Activated T-helper 1 cell treated with anti-CD3 and anti-CD28 coated beads, Interleukin-12 subunit alpha, Interleukin-12 subunit beta, Interleukin-2, Interleukin-4 antibody, amounts not matched to agents 30 ng/mL and 10 ng/mL and 1 ng/mL, durations not matched to agents 14 hours and 24 hours and 36 hours (primary cell): ENCODE measurements at regions of chr17 and their contacts with region 1.

Region 1: DNA sequence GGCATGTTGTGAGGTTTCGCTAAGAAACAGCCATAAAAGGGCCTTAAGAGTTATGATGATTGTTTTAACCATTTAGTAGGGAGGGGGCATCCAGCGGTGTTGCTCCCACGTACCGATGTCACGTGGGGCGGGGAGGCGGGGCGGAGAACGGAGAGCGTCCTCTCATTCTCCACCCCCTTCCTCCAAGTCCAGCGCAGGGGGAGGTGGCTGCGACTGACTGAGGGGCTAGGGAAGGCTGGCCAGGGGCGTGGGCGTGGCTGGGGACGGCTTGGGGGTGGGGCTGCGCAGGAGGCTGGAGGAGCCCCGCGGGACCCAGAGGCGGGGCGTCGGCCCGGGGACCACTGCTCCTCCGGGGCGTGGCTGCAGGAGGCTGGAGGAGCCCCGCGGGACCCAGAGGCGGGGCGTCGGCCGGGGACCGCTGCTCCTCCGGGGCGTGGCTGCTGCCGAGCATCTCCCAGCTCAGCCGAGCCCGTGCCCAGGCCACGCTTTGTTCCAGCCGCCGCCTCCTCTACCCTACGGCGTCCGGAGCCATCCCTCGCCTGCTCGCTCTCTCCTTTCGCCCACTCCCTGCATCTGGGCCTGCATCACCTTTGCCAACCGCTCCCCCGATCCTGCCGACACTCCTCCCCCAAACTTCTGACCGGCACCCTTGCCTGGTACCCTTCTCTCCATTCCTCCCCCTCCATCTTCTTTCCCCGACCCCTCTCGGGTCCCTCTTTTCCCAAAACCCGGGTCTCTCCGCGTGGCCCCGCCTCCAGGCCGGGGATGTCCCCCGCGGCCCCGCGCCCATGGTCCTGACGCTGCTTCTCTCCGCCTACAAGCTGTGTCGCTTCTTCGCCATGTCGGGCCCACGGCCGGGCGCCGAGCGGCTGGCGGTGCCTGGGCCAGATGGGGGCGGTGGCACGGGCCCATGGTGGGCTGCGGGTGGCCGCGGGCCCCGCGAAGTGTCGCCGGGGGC is at the start of gene SARM1:
- DNase-seq: peak; percentile 85
- H3K4me3 Mint-ChIP-seq: peak within 1 kb of the TSS; percentile 95
- H3K27ac Mint-ChIP-seq: peak within 1 kb of the TSS; percentile 98
- H3K4me1 Mint-ChIP-seq: peaks cover 14% of the 10 kb centered on the region
- H3K27me3 Mint-ChIP-seq: no peaks in the 10 kb centered on the region
- total RNA-seq, gene SARM1: 40.7 and 45.6 TPM in 2 replicates

Region 2: DNA sequence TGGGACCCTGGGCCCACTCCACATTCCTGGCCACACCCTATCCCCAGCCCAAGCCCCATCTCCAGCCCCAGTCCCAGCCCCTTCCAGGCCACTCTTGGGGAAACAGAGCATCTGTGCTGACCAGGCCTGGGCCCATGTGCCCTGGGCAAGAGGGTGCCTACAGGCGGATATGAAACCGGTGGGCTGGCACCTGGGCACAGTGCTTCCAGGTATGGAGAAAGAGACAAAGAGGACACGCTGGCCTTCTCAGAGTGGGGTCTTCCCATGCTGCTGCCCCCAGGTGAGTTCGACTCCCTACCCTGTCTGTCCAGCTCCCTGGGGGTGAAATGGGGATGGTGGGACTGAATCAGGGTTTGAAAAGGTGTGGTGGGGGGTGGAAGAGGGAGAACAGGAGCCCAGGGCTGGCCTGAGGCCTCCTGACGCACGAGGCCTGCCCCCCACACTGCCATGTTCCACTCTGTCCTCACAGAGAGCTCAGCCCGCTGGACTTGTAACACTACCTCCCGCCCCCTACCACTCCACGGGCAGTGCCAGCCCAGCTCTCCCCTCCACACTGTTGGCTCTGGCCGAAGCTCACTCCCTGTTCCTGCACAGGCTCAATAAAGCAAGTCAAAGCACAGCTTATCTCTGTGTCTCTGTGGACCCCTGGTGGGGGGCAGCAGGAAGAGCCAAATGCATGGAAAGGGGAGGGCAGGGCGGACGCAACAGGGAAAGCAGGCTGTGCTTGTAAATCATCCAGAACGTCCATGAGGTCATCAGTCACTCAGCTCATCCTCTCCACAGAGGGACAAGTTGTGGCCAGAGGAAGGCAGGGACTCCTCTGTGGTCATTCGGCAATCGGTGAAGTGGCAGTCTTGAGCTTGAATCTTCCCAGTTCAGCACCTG is 123.6 kb before region 1 on chr17:
- intact Hi-C with region 1: no loop called
- DNase-seq: no peak
- H3K4me3 Mint-ChIP-seq: no peak overlapping the region
- H3K27ac Mint-ChIP-seq: no peak overlapping the region
- H3K4me1 Mint-ChIP-seq: peaks cover 8% of the 10 kb centered on the region
- H3K27me3 Mint-ChIP-seq: peaks cover 14% of the 10 kb centered on the region

Region 3: GRCh38 chr17:28384281-28385036 is 12.9 kb after region 1 on chr17:
- intact Hi-C with region 1: loop called (anchors 1 kb)
- DNase-seq: peak; percentile 61
- H3K4me3 Mint-ChIP-seq: peak overlapping the region; percentile 84
- H3K27ac Mint-ChIP-seq: peak overlapping the region; percentile 89
- H3K4me1 Mint-ChIP-seq: peaks cover 40% of the 10 kb centered on the region
- H3K27me3 Mint-ChIP-seq: peaks cover 1% of the 10 kb centered on the region

Region 4: GRCh38 chr17:28405632-28406472 is 34.3 kb after region 1 on chr17 and contains the start of gene SLC46A1:
- intact Hi-C with region 1: loop called (anchors 5 kb)
- DNase-seq: peak; percentile 12
- H3K4me3 Mint-ChIP-seq: peak within 1 kb of the TSS; percentile 80
- H3K27ac Mint-ChIP-seq: peak within 1 kb of the TSS; percentile 44
- H3K4me1 Mint-ChIP-seq: peaks cover 9% of the 10 kb centered on the region
- H3K27me3 Mint-ChIP-seq: peaks cover 11% of the 10 kb centered on the region
- total RNA-seq, gene SLC46A1: 7.8 and 8.1 TPM in 2 replicates

Region 5: DNA sequence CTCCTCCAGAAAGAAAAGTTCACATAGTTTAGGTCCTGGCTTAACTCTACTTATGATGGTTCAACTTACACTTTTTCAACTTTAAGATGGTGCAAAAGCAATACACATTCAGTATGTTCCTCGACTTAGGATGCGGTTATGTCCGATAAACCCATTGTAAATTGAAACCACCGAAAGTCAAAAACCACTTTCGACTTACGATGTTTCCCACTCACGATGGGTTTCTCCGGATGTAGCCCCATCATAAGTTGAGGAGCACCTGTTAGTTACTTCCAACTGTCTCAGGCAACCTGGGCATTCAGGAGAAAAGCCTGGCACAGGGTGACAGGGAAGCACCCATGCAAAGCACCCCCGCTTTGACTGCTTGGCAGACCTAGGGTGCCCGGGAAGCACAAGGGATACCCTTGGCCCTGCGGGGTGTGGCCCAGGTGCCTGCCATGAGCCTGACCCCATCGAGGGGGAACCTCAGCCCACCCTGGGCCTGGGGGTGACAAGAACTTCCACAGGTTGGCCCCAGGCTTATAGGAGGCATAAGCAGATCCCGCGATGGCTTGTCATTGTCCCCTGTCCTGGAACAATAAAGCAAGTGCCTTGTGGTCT is 166.9 kb after region 1 on chr17:
- intact Hi-C with region 1: no loop called
- DNase-seq: no peak
- H3K4me3 Mint-ChIP-seq: no peak overlapping the region
- H3K27ac Mint-ChIP-seq: no peak overlapping the region
- H3K4me1 Mint-ChIP-seq: no peaks in the 10 kb centered on the region
- H3K27me3 Mint-ChIP-seq: no peaks in the 10 kb centered on the region